ENCODE measurements at regions of chr10 and their contacts with region 1.

Region 1: GRCh38 chr10:117216611-117217195 is 19.4 kb downstream of the KCNK18 start:
- DNase-seq: peak; percentile 72
- H3K4me3 ChIP-seq: peak overlapping the region; percentile 14 to 55 (median 41)
- H3K27ac ChIP-seq: no peak overlapping the region
- H3K4me1 ChIP-seq: peaks cover 0 to 14% (median 11%) of the 10 kb centered on the region in 4 donors
- H3K27me3 ChIP-seq: peaks cover 14 to 37% (median 20%) of the 10 kb centered on the region in 3 donors
- CTCF ChIP-seq: peak; percentile 92 to 100 (median 98)
- EP300 ChIP-seq: no peak
- POLR2A ChIP-seq: no peak

Region 2: GRCh38 chr10:117318909-117319308 is 102.2 kb after region 1 on chr10:
- intact Hi-C with region 1: loop called (anchors 2 kb)
- DNase-seq: no peak
- H3K4me3 ChIP-seq: no peak overlapping the region
- H3K27ac ChIP-seq: no peak overlapping the region
- H3K4me1 ChIP-seq: peaks cover 0 to 27% (median 13%) of the 10 kb centered on the region in 4 donors
- H3K27me3 ChIP-seq: no peaks in the 10 kb centered on the region
- CTCF ChIP-seq: no peak
- EP300 ChIP-seq: no peak
- POLR2A ChIP-seq: no peak

Region 3: DNA sequence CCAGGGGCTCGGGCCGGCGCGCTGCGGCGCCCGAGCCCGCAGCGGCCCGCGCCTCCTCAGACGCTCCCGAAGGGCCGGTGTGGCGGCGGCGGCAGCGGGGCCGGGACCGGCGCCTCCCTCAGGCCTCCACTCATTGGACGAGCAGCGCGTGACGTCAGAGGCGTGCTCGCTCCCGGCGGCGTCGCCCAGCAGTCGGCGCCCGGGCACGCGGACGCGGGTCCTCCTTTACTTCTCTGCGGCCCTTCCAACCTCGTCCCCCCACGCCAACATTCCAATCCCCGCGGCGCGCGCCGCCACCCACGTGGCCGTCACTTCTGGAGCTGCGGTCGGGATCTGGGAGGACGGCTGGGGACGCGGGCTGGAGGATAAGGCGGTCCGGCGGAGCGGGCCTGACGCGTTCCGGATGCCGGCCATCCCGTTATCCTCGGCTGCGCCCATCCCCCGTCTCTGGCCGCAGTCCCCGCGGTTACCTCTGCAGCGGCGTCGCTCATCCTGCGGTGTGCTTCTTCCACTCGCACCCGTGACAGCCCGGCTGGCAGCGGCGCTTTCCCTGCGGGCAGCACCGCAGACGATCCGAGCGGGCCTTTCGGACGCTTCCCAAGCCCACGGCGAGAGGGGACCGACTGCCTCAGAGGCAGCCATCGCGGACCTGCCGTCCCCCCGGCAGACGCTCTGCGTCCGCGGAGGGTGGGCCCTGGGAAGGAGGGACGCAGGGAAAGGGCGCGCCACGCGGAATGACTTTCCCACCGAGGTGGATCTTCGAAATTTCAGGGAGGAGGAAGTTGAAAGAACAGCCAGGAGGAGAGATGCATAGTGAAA is 158.9 kb after region 1 on chr10 and contains the start of gene PDZD8:
- intact Hi-C with region 1: loop called (anchors 2 kb)
- DNase-seq: peak; percentile 97
- H3K4me3 ChIP-seq: peak within 1 kb of the TSS; percentile 69 to 94 (median 85)
- H3K27ac ChIP-seq: peak within 1 kb of the TSS; percentile 89 to 99 (median 96)
- H3K4me1 ChIP-seq: peaks cover 0 to 51% (median 27%) of the 10 kb centered on the region in 4 donors
- H3K27me3 ChIP-seq: no peaks in the 10 kb centered on the region
- CTCF ChIP-seq: no peak
- EP300 ChIP-seq: peak in 1 of 4 donors; percentile 10
- POLR2A ChIP-seq: peak; percentile 80 to 81
- total RNA-seq, gene PDZD8: 25.2 to 34.3 (median 30.7) TPM

Region 4: GRCh38 chr10:117483056-117483604 is 266.4 kb after region 1 on chr10:
- intact Hi-C with region 1: loop called (anchors 5 kb)
- DNase-seq: no peak
- H3K4me3 ChIP-seq: no peak overlapping the region
- H3K27ac ChIP-seq: no peak overlapping the region
- H3K4me1 ChIP-seq: peaks cover 0 to 3% (median 0%) of the 10 kb centered on the region in 4 donors
- H3K27me3 ChIP-seq: no peaks in the 10 kb centered on the region
- CTCF ChIP-seq: no peak
- EP300 ChIP-seq: no peak
- POLR2A ChIP-seq: no peak

Region 5: DNA sequence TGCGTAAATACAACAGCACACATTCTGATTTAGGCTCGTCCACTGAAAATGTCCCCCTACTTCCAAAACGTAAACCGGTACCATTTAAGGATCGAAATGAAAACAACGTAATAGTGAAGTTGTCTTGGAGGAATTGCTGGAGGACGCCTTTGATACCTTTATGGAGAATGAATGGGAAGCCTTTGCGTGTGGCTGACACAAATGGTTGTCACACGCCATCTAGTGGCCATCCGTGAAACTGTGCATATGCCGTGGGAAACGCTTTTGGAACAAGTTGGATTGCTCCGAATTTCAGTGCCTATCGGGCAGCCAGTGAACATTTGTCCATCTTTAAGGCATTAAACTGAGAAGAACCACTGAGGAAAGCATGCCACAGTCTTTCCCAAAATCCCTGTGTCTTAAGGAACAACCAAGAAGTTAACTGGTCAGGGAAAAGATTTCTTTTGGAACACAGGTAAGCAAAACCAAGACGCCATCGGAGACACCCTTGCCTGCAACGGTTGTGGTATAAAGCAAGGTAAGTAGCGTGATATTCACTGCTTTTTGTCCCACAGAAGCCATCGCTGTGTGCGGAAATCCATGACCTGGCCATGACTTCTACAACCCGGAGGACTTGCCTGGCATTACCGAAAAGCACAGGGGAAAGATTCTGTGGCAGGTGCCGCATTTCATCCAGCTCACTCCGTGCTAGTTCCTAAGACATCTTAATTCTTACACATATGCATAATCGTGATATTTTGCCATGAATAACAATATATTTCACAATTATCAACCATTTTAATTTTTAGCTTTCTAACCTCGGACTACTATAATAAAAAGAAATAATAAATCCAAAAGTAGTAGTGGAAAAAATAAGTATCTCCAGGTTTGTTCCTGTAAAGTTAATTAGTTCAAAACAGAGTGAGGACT is 1024.8 kb after region 1 on chr10:
- intact Hi-C with region 1: loop called (anchors 2 kb)
- DNase-seq: peak; percentile 88
- H3K4me3 ChIP-seq: no peak overlapping the region
- H3K27ac ChIP-seq: no peak overlapping the region
- H3K4me1 ChIP-seq: peaks cover 0 to 6% (median 0%) of the 10 kb centered on the region in 4 donors
- H3K27me3 ChIP-seq: peaks cover 3 to 81% (median 30%) of the 10 kb centered on the region in 3 donors
- CTCF ChIP-seq: peak; percentile 57 to 92 (median 86)
- EP300 ChIP-seq: no peak
- POLR2A ChIP-seq: no peak